Activated naive CD4-positive, alpha-beta T cell treated with anti-CD3 and anti-CD28 coated beads for 36 hours (primary cell): ENCODE measurements at regions of chr1 and their contacts with region 1.

Region 1: DNA sequence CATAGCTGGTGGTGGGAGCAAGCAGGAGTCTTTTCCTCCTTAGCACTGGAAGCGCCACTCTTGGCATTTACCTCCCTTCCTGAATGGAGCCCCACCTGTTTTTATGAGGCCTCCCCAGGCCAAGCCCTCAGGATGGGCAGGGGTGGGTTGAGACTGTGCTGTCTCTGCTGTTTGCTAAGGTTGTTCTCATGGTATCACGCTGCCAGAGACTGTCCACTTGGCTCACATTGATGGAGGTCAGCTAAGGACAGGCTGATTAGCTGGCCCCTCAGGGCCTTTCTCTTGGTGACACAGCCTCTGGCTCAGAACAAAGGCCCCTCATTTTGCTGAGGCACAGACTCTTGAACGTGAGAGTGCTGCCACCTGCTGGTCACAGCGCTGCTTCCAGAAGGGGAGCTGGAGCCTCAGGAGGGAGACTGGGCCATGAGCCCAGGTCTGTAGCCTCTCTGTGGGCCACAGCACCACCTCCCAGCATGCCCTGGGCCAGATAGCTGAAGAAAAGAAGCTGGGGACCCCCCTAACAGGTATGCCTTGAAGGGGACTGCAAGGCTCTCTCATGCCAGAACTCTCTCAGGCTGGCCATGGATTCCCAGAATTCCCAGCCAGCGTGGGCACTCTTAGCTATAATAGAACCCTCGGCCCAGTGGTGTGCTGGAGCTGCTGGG is 85.6 kb downstream of the CD58 start:
- DNase-seq: peak; percentile 94
- H3K4me3 Mint-ChIP-seq: no peak overlapping the region
- H3K27ac Mint-ChIP-seq: no peak overlapping the region
- H3K4me1 Mint-ChIP-seq: no peaks in the 10 kb centered on the region
- H3K27me3 Mint-ChIP-seq: no peaks in the 10 kb centered on the region

Region 2: DNA sequence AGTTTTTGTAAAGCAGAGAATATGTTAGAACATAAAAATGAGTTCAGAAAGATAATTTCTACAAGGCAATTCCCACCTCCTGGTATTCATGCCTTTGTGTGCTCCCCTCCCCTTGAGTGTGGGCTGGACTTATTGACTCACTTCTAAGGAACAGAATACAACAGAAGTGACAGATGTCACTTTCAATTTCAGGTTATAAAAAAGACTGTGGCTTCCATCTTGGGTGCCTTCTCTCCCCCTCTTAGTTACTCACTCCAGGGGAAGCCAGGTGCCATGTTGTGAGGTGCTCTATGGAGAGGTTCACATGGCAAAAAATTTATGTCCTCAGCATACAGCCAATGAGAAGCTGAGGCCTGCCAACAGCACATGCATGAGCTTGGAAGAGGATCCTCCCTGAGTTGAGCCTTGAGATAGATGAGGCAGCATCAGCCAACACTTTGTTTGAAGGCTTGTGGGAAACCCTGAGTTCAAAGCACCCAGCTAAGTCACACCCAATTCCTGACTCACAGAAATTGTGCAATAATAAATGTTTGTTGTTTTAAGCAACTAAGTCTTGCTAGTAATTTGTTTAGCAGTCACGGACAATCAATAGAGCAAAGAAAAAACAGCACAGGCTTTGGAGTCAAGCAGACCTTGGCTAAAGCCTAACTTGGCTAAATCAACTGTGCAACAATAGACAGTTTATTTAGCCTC is 1073.7 kb before region 1 on chr1:
- CTCF ChIA-PET with region 1: no interaction called
- intact Hi-C with region 1: no loop called
- DNase-seq: no peak
- H3K4me3 Mint-ChIP-seq: no peak overlapping the region
- H3K27ac Mint-ChIP-seq: no peak overlapping the region
- H3K4me1 Mint-ChIP-seq: peaks cover 3% of the 10 kb centered on the region
- H3K27me3 Mint-ChIP-seq: peaks cover 13% of the 10 kb centered on the region

Region 3: GRCh38 chr1:116122955-116123757 is 362.0 kb before region 1 on chr1:
- CTCF ChIA-PET with region 1: interaction called, 11 read pairs
- intact Hi-C with region 1: no loop called
- DNase-seq: no peak
- H3K4me3 Mint-ChIP-seq: no peak overlapping the region
- H3K27ac Mint-ChIP-seq: no peak overlapping the region
- H3K4me1 Mint-ChIP-seq: peaks cover 25% of the 10 kb centered on the region
- H3K27me3 Mint-ChIP-seq: peaks cover 3% of the 10 kb centered on the region

Region 4: DNA sequence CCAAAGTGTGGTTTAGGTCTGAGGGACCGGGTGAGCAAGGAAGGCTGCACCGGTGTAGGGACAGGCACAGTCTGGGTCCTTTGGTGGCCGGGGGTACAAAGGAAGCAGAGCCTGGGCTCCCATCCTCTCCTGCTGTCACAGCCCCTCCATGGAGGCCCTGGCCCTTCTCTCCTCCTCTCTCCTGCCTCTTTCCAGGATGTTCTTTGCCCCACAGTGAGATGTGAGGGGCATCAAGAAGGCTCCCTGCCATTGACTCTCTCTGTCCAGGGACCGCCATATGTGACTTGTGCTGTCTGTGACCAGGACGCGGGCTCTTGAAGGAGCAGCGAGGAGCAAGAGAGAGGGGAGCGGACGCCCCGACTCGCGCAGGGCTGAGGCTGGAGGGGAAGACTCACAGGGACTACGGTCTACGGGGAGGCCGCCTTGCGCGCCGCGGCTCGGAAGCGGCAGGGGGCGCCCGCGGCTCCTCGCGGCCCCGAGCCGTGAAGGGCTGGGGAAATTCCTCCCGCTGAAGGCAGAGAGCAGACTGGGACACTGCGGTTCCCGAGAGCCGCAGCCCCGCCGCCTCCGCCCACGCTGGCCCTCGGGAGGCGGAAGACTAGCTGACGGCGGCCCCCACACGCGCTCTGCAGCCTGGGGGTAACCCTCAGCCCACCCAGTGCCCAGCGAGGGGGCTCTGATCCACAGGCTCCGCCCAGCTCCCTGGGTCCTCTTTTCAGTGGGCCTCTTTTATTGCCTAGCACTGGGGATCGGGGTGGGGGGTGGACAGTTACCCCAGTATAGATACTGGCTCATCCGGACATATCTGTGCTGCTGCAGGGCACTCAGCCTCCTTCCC is 333.2 kb before region 1 on chr1:
- CTCF ChIA-PET with region 1: interaction called, 396 read pairs
- intact Hi-C with region 1: loop called (anchors 2 kb)
- DNase-seq: peak; percentile 86
- H3K4me3 Mint-ChIP-seq: peak overlapping the region; percentile 60
- H3K27ac Mint-ChIP-seq: peak overlapping the region; percentile 14
- H3K4me1 Mint-ChIP-seq: peaks cover 18% of the 10 kb centered on the region
- H3K27me3 Mint-ChIP-seq: no peaks in the 10 kb centered on the region

Region 5: DNA sequence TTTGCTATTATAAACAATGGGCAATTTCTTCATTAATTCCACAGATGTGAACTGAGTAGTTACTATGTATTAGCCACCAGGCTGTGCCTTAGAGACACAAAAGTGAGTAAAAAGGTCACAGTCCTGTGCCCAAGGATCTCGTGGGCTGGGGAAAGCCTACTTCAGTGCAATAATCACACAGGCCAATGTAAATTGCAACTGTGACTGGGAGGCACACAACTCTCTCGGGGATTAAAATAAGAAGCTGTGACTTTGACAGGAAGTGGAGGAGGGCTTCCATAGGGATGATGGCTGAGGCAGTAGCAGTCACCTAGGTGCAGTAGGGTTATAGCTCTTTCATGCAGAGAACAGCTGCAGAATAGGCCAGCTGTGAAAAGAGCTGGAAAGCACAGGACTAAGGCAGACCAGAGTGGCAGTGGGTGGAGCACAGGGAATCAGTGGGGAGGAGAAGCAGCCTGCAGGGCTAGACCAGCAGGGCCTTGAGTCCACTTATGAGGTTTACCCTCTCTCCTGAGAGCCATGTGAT is 252.2 kb before region 1 on chr1:
- CTCF ChIA-PET with region 1: interaction called, 12 read pairs
- intact Hi-C with region 1: loop called (anchors 1 kb)
- DNase-seq: peak; percentile 25
- H3K4me3 Mint-ChIP-seq: no peak overlapping the region
- H3K27ac Mint-ChIP-seq: no peak overlapping the region
- H3K4me1 Mint-ChIP-seq: peaks cover 17% of the 10 kb centered on the region
- H3K27me3 Mint-ChIP-seq: no peaks in the 10 kb centered on the region

Region 6: GRCh38 chr1:116372587-116373444 is 112.4 kb before region 1 on chr1 and contains the start of gene ATP1A1:
- CTCF ChIA-PET with region 1: interaction called, 18 read pairs
- intact Hi-C with region 1: no loop called
- DNase-seq: peak; percentile 98
- H3K4me3 Mint-ChIP-seq: peak within 1 kb of the TSS; percentile 92
- H3K27ac Mint-ChIP-seq: peak within 1 kb of the TSS; percentile 95
- H3K4me1 Mint-ChIP-seq: peaks cover 30% of the 10 kb centered on the region
- H3K27me3 Mint-ChIP-seq: no peaks in the 10 kb centered on the region
- total RNA-seq, gene ATP1A1: 360 to 370 TPM

Region 7: DNA sequence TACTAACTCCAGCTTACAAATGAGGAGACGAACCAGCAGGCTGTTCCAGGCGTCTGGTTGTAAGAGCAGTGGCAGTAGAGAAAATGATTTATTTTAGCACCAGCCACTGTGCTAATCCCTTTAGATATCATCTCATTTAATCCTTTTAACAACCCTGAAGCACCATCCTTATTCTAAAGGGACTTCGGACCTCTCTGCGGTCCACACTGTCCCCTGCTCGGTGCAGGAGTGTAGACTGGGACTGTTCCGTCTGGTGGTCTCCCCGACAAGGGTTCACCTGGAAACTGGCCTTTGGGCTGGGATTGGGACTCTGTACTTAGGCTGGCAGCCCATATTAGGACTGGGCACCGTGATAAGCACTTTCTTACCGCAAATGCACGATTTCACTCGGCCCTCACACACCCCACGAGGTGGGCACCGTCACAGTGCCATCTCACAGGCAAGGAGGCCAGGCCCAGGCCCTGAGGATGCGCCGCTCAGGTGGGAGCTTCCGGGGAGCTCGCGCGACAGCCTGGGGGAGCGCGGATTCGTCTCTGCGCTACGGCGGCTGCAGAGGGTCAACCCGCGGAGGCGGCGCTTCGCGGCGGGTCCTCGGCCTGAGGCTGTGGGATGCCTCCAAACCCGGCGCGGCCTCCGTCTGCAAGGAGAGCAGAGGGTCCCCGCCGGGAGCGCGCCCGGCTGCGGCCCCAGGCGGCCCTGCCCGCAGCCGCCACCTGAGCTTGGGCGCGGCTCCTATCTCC is 66.9 kb before region 1 on chr1:
- CTCF ChIA-PET with region 1: interaction called, 12 read pairs
- intact Hi-C with region 1: no loop called
- DNase-seq: peak; percentile 88
- H3K4me3 Mint-ChIP-seq: peak overlapping the region; percentile 87
- H3K27ac Mint-ChIP-seq: peak overlapping the region; percentile 78
- H3K4me1 Mint-ChIP-seq: peaks cover 32% of the 10 kb centered on the region
- H3K27me3 Mint-ChIP-seq: no peaks in the 10 kb centered on the region

Region 8: GRCh38 chr1:116498789-116499628 is 13.8 kb after region 1 on chr1:
- CTCF ChIA-PET with region 1: interaction called, 162 read pairs
- intact Hi-C with region 1: loop called (anchors 2 kb)
- DNase-seq: peak; percentile 70
- H3K4me3 Mint-ChIP-seq: no peak overlapping the region
- H3K27ac Mint-ChIP-seq: no peak overlapping the region
- H3K4me1 Mint-ChIP-seq: peaks cover 17% of the 10 kb centered on the region
- H3K27me3 Mint-ChIP-seq: no peaks in the 10 kb centered on the region